ENCODE measurements at regions of chr11 and their contacts with region 1.

Region 1: DNA sequence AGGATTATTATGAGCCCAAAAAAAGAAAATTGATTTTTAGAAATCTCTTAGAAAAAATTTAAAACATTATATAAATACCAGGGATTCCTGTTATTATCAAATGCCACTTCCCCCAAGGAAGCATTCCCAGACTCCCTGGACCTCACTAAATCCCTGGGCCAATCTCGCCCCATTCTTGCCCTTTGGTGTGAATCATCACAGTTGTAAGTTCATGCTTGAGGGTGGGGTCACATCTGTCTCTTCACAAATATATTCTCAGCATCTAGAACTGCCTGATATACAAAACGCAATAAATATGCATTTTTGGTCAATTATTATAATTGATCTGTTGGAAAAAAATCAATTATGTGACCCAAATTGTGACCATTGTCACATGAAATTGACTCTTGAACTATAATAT is 8.3 kb upstream of the OR4D6 start:
- DNase-seq: no peak
- H3K4me3 ChIP-seq: no peak overlapping the region
- H3K27ac ChIP-seq: no peak overlapping the region
- H3K4me1 ChIP-seq: no peaks in the 10 kb centered on the region
- H3K27me3 ChIP-seq: no peaks in the 10 kb centered on the region
- CTCF ChIP-seq: no peak
- EP300 ChIP-seq: no peak
- POLR2A ChIP-seq: no peak

Region 2: DNA sequence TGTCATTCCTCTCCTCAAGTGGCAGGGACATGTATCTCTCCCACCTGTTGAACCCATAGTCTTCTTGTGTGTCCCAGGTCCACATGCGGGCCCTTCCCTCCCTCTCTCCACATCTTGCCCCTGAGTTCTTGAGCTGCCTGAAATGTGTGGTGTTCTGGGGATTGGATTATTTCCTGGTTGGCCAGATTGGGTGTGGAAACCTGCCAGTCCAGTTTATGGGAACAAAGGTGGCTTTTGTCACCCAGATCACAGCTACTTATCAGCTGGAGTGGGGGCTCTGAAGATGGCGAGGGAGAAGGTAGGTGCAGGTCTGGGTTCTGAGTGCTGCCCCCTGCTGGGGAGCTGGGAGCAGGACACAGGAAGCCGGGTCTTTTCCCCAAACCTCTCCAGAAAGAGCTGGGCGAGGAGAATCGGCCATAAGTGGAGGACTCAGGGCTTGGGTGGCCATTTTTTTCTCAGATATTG is 262.3 kb before region 1 on chr11:
- in situ Hi-C with region 1: no loop called
- intact Hi-C with region 1: no loop called
- DNase-seq: peak; percentile 90
- H3K4me3 ChIP-seq: peak overlapping the region in 3 of 4 donors; percentile 3 to 29 (median 27)
- H3K27ac ChIP-seq: peak overlapping the region; percentile 85 to 90 (median 87)
- H3K4me1 ChIP-seq: peaks cover 48 to 91% (median 72%) of the 10 kb centered on the region in 4 donors
- H3K27me3 ChIP-seq: no peaks in the 10 kb centered on the region
- CTCF ChIP-seq: peak; percentile 64 to 92 (median 81)
- EP300 ChIP-seq: no peak
- POLR2A ChIP-seq: peak; percentile 65

Region 3: DNA sequence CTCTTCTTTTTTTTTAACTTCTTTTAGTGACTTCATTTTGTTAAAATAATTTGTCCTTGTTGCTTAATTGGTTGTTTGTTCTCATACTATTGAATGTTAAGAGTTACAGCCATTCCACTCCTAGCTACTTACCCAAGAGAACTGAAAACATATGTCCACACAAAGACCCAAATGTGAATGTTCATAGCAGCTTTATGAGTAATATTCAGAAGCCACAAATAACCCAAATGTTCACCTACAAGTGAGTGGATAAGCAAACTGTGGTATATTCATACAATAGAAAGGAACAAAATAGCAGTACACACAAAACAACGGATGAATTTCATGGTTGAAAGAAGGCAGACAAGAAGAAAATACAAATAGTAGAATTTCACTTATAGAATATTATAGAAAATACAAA is 53.4 kb after region 1 on chr11:
- in situ Hi-C with region 1: loop called in 1 of 4 experiments (anchors 10 kb)
- intact Hi-C with region 1: no loop called
- DNase-seq: no peak
- H3K4me3 ChIP-seq: no peak overlapping the region
- H3K27ac ChIP-seq: no peak overlapping the region
- H3K4me1 ChIP-seq: no peaks in the 10 kb centered on the region
- H3K27me3 ChIP-seq: peaks cover 8% of the 10 kb centered on the region
- CTCF ChIP-seq: no peak
- EP300 ChIP-seq: no peak
- POLR2A ChIP-seq: no peak

Measured in transverse colon (tissue), 4 donors.